ENCODE measurements at regions of chr1 and their contacts with region 1.

Region 1: GRCh38 chr1:166089804-166090203 is 77.0 kb downstream of the FAM78B start:
- DNase-seq: peak in 2 of 5 donors; percentile 6 to 14
- H3K4me3 ChIP-seq: no peak overlapping the region
- H3K4me3 Mint-ChIP-seq: peak overlapping the region in 2 of 8 donors; percentile 11 to 43
- H3K27ac ChIP-seq: no peak overlapping the region
- H3K27ac Mint-ChIP-seq: no peak overlapping the region
- H3K4me1 ChIP-seq: peaks cover 18% of the 10 kb centered on the region
- H3K4me1 Mint-ChIP-seq: peaks cover 14 to 28% (median 18%) of the 10 kb centered on the region in 4 donors
- H3K27me3 ChIP-seq: no peaks in the 10 kb centered on the region
- H3K27me3 Mint-ChIP-seq: peaks cover 0 to 3% of the 10 kb centered on the region in 2 donors

Region 2: GRCh38 chr1:165884690-165885304 is 205.0 kb before region 1 on chr1:
- CTCF ChIA-PET with region 1: no interaction called
- POLR2A ChIA-PET with region 1: no interaction called
- intact Hi-C with region 1: no loop called
- DNase-seq: no peak
- H3K4me3 ChIP-seq: no peak overlapping the region
- H3K4me3 Mint-ChIP-seq: no peak overlapping the region
- H3K27ac ChIP-seq: no peak overlapping the region
- H3K27ac Mint-ChIP-seq: no peak overlapping the region
- H3K4me1 ChIP-seq: no peaks in the 10 kb centered on the region
- H3K4me1 Mint-ChIP-seq: peaks cover 0 to 4% (median 2%) of the 10 kb centered on the region in 4 donors
- H3K27me3 ChIP-seq: no peaks in the 10 kb centered on the region
- H3K27me3 Mint-ChIP-seq: no peaks in the 10 kb centered on the region

Region 3: GRCh38 chr1:166111430-166111829 is 21.6 kb after region 1 on chr1:
- CTCF ChIA-PET with region 1: no interaction called
- POLR2A ChIA-PET with region 1: no interaction called
- intact Hi-C with region 1: no loop called
- DNase-seq: no peak
- H3K4me3 ChIP-seq: no peak overlapping the region
- H3K4me3 Mint-ChIP-seq: no peak overlapping the region
- H3K27ac ChIP-seq: no peak overlapping the region
- H3K27ac Mint-ChIP-seq: no peak overlapping the region
- H3K4me1 ChIP-seq: no peaks in the 10 kb centered on the region
- H3K4me1 Mint-ChIP-seq: no peaks in the 10 kb centered on the region
- H3K27me3 ChIP-seq: no peaks in the 10 kb centered on the region
- H3K27me3 Mint-ChIP-seq: no peaks in the 10 kb centered on the region

Region 4: DNA sequence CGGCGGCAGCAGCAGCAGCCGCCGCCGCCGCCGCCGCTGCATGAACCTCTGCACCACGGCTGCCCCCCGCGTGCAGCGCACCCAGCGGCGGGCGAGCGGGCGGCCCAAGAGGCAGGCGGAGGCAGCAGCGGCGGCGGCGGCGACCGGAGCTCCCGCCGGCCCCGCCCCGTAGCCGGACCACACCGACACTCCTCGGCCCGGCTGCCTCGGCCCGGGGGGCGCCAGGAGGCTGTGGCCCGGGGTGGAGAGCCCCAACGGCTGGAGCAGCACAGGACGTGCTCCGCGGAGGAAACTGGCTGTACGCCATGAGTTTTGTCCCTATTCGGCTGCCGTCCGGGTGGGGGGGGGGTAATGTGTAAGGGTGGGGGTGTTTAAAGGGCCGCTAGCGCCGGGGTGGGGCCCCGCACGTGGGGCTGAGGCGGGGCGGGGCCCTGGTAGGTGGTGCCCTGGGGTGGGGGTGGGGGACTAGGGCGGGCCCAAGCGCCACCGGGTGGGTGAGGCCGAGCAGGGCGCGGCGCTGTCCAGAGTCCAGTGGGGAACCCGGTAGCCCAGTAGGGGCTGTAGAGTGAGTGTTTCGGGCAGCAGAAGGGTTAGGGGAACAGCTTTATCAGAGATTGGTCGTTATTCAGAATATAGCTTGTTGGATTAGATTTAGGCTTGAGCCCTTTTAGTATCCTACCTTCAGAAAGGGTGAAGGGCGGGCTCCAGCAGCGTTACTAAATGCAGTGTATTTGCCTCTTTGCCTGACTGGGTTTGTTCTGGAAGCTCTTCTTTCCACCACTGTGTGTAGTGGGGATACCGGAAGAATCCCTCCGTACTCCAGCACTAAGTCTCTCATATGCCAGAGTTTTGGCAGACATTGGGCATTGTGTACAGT is 77.1 kb after region 1 on chr1 and contains the start of gene FAM78B:
- CTCF ChIA-PET with region 1: no interaction called
- POLR2A ChIA-PET with region 1: no interaction called
- intact Hi-C with region 1: loop called (anchors 2 kb)
- DNase-seq: peak; percentile 48 to 53 (median 51)
- H3K4me3 ChIP-seq: peak within 1 kb of the TSS in 1 of 2 donors; percentile 8
- H3K4me3 Mint-ChIP-seq: peak within 1 kb of the TSS; percentile 79 to 87 (median 81)
- H3K27ac ChIP-seq: no peak within 1 kb of the TSS
- H3K27ac Mint-ChIP-seq: peak within 1 kb of the TSS in 4 of 7 donors; percentile 8 to 44 (median 31)
- H3K4me1 ChIP-seq: peaks cover 14% of the 10 kb centered on the region
- H3K4me1 Mint-ChIP-seq: peaks cover 8 to 16% (median 12%) of the 10 kb centered on the region in 4 donors
- H3K27me3 ChIP-seq: peaks cover 12% of the 10 kb centered on the region
- H3K27me3 Mint-ChIP-seq: peaks cover 17% of the 10 kb centered on the region in 2 donors
- total RNA-seq, gene FAM78B: 0.22 to 0.32 TPM

Region 5: GRCh38 chr1:166489670-166490436 is 400.0 kb after region 1 on chr1:
- CTCF ChIA-PET with region 1: no interaction called
- POLR2A ChIA-PET with region 1: no interaction called
- intact Hi-C with region 1: loop called (anchors 10 kb)
- DNase-seq: peak; percentile 56 to 70 (median 62)
- H3K4me3 ChIP-seq: peak overlapping the region; percentile 20 to 68
- H3K4me3 Mint-ChIP-seq: no peak overlapping the region
- H3K27ac ChIP-seq: peak overlapping the region; percentile 80
- H3K27ac Mint-ChIP-seq: no peak overlapping the region
- H3K4me1 ChIP-seq: peaks cover 23% of the 10 kb centered on the region
- H3K4me1 Mint-ChIP-seq: peaks cover 0 to 18% (median 7%) of the 10 kb centered on the region in 4 donors
- H3K27me3 ChIP-seq: no peaks in the 10 kb centered on the region
- H3K27me3 Mint-ChIP-seq: peaks cover 1 to 5% of the 10 kb centered on the region in 2 donors

Measured in CD4-positive, alpha-beta memory T cell (primary cell).